ENCODE measurements at regions of chr6 and their contacts with region 1.

Region 1: GRCh38 chr6:125872259-125872921 is 81.6 kb downstream of the NCOA7 start:
- DNase-seq: no peak
- ATAC-seq: no peak
- H3K4me3 Mint-ChIP-seq: no peak overlapping the region
- H3K27ac Mint-ChIP-seq: no peak overlapping the region
- H3K4me1 Mint-ChIP-seq: peaks cover 14% of the 10 kb centered on the region
- H3K27me3 Mint-ChIP-seq: no peaks in the 10 kb centered on the region
- CTCF ChIP-seq: no peak

Region 2: GRCh38 chr6:125714441-125715090 is 157.8 kb before region 1 on chr6:
- CTCF ChIA-PET with region 1: no interaction called
- POLR2A ChIA-PET with region 1: no interaction called
- DNase-seq: no peak
- ATAC-seq: no peak
- H3K4me3 Mint-ChIP-seq: no peak overlapping the region
- H3K27ac Mint-ChIP-seq: no peak overlapping the region
- H3K4me1 Mint-ChIP-seq: peaks cover 20% of the 10 kb centered on the region
- H3K27me3 Mint-ChIP-seq: peaks cover 4% of the 10 kb centered on the region; the same call in 1 of the 2 replicates
- CTCF ChIP-seq: no peak

Region 3: GRCh38 chr6:125798734-125799508 is 73.5 kb before region 1 on chr6:
- CTCF ChIA-PET with region 1: no interaction called
- POLR2A ChIA-PET with region 1: interaction called, 10 read pairs
- DNase-seq: no peak
- ATAC-seq: no peak
- H3K4me3 Mint-ChIP-seq: no peak overlapping the region
- H3K27ac Mint-ChIP-seq: no peak overlapping the region
- H3K4me1 Mint-ChIP-seq: peaks cover under 1% of the 10 kb centered on the region; the same call in 1 of the 2 replicates
- H3K27me3 Mint-ChIP-seq: no peaks in the 10 kb centered on the region
- CTCF ChIP-seq: no peak

Region 4: DNA sequence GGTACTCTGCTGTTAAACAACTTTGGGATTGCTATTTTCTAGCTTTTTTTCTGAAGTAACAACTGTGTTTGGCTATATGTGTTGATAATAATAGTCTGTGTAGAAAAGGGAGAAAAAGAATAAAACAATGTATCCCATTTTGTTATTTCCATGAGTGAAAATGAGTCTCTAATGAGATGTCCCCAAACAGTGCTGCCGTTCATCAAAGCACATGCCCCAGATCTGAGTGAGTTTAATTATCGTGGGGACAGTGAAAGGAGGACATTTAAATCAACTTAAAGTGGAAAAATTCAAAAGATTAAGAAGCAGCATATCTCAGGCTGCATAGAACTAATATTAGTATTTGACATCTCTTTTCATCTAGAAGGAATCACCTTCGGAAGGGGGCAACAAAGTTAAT is 22.0 kb before region 1 on chr6:
- CTCF ChIA-PET with region 1: no interaction called
- POLR2A ChIA-PET with region 1: no interaction called
- DNase-seq: no peak
- ATAC-seq: no peak
- H3K4me3 Mint-ChIP-seq: no peak overlapping the region
- H3K27ac Mint-ChIP-seq: no peak overlapping the region
- H3K4me1 Mint-ChIP-seq: peaks cover 2% of the 10 kb centered on the region; the same call in 1 of the 2 replicates
- H3K27me3 Mint-ChIP-seq: no peaks in the 10 kb centered on the region
- CTCF ChIP-seq: no peak